WTC11 (cell line): ENCODE measurements at regions of chr5 and their contacts with region 1.

Region 1: DNA sequence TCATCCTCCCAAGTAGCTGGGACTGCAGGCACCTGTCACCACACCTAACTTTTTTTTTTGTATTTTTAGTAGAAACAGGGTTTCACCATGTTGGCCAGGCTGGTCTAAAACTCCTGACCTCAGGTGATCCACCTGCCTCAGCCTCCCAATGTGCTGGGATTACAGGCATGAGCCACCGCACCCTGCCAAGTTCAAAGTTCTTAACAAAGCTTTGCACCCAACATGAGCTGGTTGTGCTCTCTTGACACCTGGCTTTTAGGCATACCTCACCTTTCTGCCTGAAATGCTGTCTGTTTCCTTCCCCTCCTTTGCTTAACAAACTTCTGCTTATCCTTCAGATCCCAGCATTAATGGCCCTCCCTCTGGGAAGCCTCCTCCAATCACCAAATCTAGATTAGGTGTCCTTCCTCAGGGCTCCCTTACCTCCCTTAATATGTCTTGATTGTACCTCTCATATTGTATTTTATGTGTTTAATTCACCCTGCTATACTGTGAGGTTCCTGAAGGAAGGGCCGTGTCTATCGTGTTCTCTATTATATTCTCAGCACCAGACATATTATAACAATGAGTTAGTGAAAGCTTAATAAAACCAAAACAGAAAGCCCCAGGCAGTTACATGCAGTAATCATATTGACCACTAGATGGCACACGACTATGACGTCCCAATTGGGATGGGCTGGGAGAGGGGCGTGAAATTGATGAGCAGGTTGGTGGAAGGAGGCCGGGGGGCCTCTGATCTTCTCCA is 62.9 kb upstream of the PPARGC1B start:
- DNase-seq: peak; percentile 44
- ATAC-seq: peak; percentile 80
- H3K4me3 Mint-ChIP-seq: no peak overlapping the region
- H3K27ac Mint-ChIP-seq: no peak overlapping the region; the same call in 1 of the 2 replicates
- H3K4me1 Mint-ChIP-seq: no peaks in the 10 kb centered on the region; the same call in 1 of the 2 replicates
- H3K27me3 Mint-ChIP-seq: no peaks in the 10 kb centered on the region; the same call in 1 of the 2 replicates
- CTCF ChIP-seq: peak; percentile 86

Region 2: GRCh38 chr5:149128023-149128875 is 539.0 kb before region 1 on chr5:
- CTCF ChIA-PET with region 1: no interaction called
- POLR2A ChIA-PET with region 1: no interaction called
- DNase-seq: peak; percentile 67
- ATAC-seq: peak; percentile 72
- H3K4me3 Mint-ChIP-seq: no peak overlapping the region
- H3K27ac Mint-ChIP-seq: no peak overlapping the region
- H3K4me1 Mint-ChIP-seq: peaks cover 28% of the 10 kb centered on the region
- H3K27me3 Mint-ChIP-seq: no peaks in the 10 kb centered on the region
- CTCF ChIP-seq: peak; percentile 56

Region 3: DNA sequence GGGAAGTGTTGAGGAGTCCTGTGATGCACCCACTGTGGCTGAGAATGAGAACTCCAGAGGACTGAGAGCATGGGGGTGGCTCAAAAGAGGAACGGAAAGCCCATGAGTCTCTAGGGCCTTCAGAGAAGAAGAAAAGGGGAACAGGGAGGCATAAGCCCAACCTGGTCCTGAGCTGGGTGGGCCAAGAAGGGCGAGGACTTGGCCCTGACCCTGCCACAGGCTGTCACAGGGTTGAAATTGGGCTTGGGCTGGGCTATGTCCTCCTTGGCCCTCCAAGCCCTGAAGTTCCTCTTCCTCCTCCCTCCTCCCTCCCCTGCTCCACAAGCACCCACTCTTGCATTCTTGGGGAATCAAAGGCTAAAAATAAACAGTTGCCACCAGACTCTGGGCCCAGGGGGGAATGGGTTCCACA is 13.6 kb after region 1 on chr5:
- CTCF ChIA-PET with region 1: interaction called, 34 read pairs
- POLR2A ChIA-PET with region 1: no interaction called
- DNase-seq: no peak
- ATAC-seq: no peak
- H3K4me3 Mint-ChIP-seq: no peak overlapping the region
- H3K27ac Mint-ChIP-seq: no peak overlapping the region
- H3K4me1 Mint-ChIP-seq: no peaks in the 10 kb centered on the region
- H3K27me3 Mint-ChIP-seq: peaks cover 2% of the 10 kb centered on the region
- CTCF ChIP-seq: no peak

Region 4: GRCh38 chr5:149731639-149732323 is 64.5 kb after region 1 on chr5:
- CTCF ChIA-PET with region 1: interaction called, 32 read pairs
- POLR2A ChIA-PET with region 1: interaction called, 3 read pairs
- DNase-seq: peak; percentile 45
- ATAC-seq: peak; percentile 41
- H3K4me3 Mint-ChIP-seq: peak overlapping the region; percentile 77
- H3K27ac Mint-ChIP-seq: no peak overlapping the region
- H3K4me1 Mint-ChIP-seq: peaks cover 29% of the 10 kb centered on the region
- H3K27me3 Mint-ChIP-seq: peaks cover 22% of the 10 kb centered on the region
- CTCF ChIP-seq: no peak

Region 5: GRCh38 chr5:149775785-149776184 is 108.5 kb after region 1 on chr5:
- CTCF ChIA-PET with region 1: interaction called, 12 read pairs
- POLR2A ChIA-PET with region 1: no interaction called
- DNase-seq: no peak
- ATAC-seq: peak; percentile 18; the same call in 1 of the 2 replicates
- H3K4me3 Mint-ChIP-seq: no peak overlapping the region
- H3K27ac Mint-ChIP-seq: no peak overlapping the region
- H3K4me1 Mint-ChIP-seq: peaks cover 70% of the 10 kb centered on the region
- H3K27me3 Mint-ChIP-seq: no peaks in the 10 kb centered on the region
- CTCF ChIP-seq: peak; percentile 58

Region 6: DNA sequence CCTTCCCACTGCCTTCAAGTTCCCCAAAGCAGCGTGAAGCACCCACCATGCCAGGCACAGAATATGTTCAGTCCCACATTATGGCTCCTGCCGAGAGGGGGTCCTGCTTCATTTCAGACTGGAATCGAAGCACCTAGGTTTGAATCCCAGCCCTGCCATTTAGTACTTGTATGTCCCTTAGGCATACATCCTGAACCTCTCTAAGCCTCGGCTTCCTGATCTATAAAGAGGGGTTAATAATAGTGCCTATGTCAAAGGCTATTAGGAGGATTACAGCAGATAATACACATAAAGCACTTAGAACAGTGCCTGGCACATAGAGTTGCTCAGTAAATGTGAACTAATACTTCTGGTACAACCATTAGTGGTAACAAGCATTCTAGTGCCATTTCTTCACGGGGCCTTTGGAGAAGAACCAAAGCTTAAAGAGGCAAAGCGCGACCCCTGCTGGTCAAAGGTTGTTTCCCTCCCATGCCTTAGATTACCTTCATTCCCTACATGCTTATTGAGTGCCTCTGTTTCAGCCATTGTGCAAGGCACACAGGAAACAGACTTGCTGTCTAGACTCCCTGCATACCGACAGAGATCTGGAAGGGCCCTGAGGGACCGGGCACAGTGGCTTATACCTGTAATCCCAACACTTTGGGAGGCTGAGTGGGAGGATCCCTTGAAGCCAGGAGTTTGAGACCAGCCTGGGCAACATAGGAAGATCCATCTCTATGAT is 161.1 kb after region 1 on chr5:
- CTCF ChIA-PET with region 1: interaction called, 19 read pairs
- POLR2A ChIA-PET with region 1: no interaction called
- DNase-seq: peak; percentile 90
- ATAC-seq: peak; percentile 94
- H3K4me3 Mint-ChIP-seq: no peak overlapping the region
- H3K27ac Mint-ChIP-seq: peak overlapping the region; percentile 67
- H3K4me1 Mint-ChIP-seq: peaks cover 5% of the 10 kb centered on the region
- H3K27me3 Mint-ChIP-seq: no peaks in the 10 kb centered on the region
- CTCF ChIP-seq: peak; percentile 68

Region 7: GRCh38 chr5:149852641-149853330 is 185.5 kb after region 1 on chr5:
- CTCF ChIA-PET with region 1: interaction called, 20 read pairs
- POLR2A ChIA-PET with region 1: no interaction called
- DNase-seq: peak; percentile 82
- ATAC-seq: peak; percentile 94
- H3K4me3 Mint-ChIP-seq: no peak overlapping the region
- H3K27ac Mint-ChIP-seq: 0 out of 2 replicates have a peak overlapping the region, but pooled peaks have one; percentile 57
- H3K4me1 Mint-ChIP-seq: peaks cover 4% of the 10 kb centered on the region; the same call in 1 of the 2 replicates
- H3K27me3 Mint-ChIP-seq: no peaks in the 10 kb centered on the region
- CTCF ChIP-seq: peak; percentile 77; the same call in 1 of the 2 replicates